ENCODE measurements at regions of chr3 and their contacts with region 1.

Region 1: GRCh38 chr3:120450600-120451271 is at the start of gene FSTL1:
- DNase-seq: peak; percentile 84
- ATAC-seq: peak; percentile 85
- total RNA-seq, gene FSTL1: 217 TPM

Region 2: DNA sequence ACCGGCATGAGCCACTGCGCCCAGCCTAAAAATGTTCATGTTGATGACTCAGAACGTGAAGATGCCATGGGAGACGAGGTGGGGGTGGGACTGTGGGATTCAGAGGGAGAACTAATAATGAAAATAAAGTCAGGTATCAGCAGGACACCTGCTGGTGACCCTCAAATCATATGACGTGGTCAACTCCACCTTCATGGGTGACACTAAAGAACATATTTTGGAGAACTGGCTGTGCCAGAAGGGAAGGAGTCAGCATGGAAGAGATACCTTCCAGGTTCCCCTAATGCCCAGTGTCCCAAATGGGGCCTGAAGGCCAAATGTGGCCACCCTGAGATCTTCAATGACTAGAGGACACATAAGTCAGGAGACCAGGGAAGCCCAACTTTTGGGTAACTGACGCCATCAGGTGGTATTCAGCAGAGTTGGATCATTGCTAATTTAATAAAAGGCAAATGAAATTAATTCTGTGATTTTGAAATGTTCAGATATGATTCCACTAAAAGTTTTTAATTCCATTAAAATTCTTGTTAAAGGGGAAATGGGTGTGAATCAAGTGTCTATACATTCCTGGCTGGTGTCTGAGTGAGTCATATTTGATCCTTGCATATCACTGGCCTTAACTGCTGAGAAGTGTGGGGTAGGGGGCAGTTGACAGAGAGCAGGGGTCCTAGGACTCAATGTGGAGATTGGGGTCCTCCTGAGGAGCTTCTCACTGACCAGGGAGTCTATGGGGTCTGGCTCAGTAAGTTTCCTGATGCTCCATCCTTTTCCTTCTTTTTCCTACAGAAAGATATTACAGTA is 267.8 kb before region 1 on chr3:
- intact Hi-C with region 1: no loop called
- DNase-seq: no peak
- ATAC-seq: no peak

Region 3: DNA sequence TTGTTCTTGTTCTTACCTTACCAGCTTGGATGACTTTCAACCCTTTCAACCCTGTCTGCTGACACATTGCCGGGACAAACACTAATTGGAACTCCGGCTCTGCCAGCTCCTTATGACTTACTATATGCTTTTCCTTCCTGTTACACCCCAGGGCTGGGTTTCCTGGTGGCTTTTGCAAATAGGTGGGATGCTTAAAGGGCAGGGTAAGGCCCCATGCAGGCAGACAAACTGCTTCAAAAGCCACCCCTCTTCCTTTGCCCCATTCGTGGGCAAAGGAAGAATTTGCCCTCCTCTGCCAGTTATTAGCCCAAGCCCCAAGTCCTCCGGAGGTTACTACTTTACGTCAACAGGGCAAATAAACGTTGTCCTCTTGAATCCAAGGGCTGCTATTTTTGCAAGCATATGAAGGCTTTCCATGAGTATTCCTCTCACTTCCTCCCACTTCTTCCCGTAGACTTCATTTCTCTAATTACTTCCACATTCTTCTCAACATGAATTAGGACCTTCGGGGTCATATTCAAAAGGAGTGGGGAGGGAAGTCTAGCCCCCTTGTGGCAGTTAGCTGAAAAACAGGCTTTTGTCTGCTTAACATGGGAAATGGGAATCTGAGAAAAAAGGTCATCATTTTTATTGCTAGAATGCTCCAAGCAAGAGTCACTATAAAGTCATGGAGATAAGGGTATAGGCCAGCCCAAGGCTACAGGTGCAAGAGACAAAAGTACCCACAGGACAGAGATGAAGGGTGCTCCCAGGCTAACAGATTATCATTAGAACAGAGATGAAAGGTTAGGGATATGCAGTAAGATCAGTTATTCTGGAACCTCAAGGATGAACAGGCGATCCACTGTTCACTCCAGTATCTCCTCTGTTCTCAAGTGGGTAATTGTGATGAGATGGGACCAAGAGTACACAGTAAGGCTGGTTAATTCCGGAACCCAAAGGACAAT is 56.4 kb after region 1 on chr3:
- intact Hi-C with region 1: loop called (anchors 2 kb)
- DNase-seq: no peak
- ATAC-seq: peak; percentile 50

Measured in Right ventricle myocardium inferior (tissue), 1 donor.